Activated T-helper 2 cell treated with anti-CD3 and anti-CD28 coated beads, Interferon-gamma antibody, Interleukin-2, Interleukin-4, amounts not matched to agents 10 μg/mL and 5 μg/mL and 100 μg/mL, durations not matched to agents 14 hours and 24 hours and 36 hours (primary cell): ENCODE measurements at regions of chr7 and their contacts with region 1.

Region 1: GRCh38 chr7:50266635-50267386 is 37.7 kb upstream of the IKZF1 start:
- DNase-seq: peak; percentile 78
- H3K4me3 Mint-ChIP-seq: peak overlapping the region; percentile 68
- H3K27ac Mint-ChIP-seq: peak overlapping the region; percentile 94
- H3K4me1 Mint-ChIP-seq: peaks cover 88% of the 10 kb centered on the region
- H3K27me3 Mint-ChIP-seq: no peaks in the 10 kb centered on the region

Region 2: GRCh38 chr7:50142425-50143017 is 124.3 kb before region 1 on chr7:
- intact Hi-C with region 1: loop called (anchors 2 kb)
- DNase-seq: no peak
- H3K4me3 Mint-ChIP-seq: peak overlapping the region; percentile 30
- H3K27ac Mint-ChIP-seq: peak overlapping the region; percentile 77
- H3K4me1 Mint-ChIP-seq: peaks cover 44% of the 10 kb centered on the region
- H3K27me3 Mint-ChIP-seq: peaks cover 2% of the 10 kb centered on the region

Region 3: GRCh38 chr7:50212666-50213621 is 53.9 kb before region 1 on chr7:
- intact Hi-C with region 1: loop called (anchors 1 kb)
- DNase-seq: no peak
- H3K4me3 Mint-ChIP-seq: peak overlapping the region; percentile 64
- H3K27ac Mint-ChIP-seq: peak overlapping the region; percentile 92
- H3K4me1 Mint-ChIP-seq: peaks cover 90% of the 10 kb centered on the region
- H3K27me3 Mint-ChIP-seq: no peaks in the 10 kb centered on the region

Region 4: GRCh38 chr7:50246551-50246950 is 20.3 kb before region 1 on chr7:
- intact Hi-C with region 1: no loop called
- DNase-seq: no peak
- H3K4me3 Mint-ChIP-seq: no peak overlapping the region
- H3K27ac Mint-ChIP-seq: no peak overlapping the region
- H3K4me1 Mint-ChIP-seq: peaks cover 9% of the 10 kb centered on the region
- H3K27me3 Mint-ChIP-seq: no peaks in the 10 kb centered on the region

Region 5: GRCh38 chr7:50281680-50282445 is 15.1 kb after region 1 on chr7:
- intact Hi-C with region 1: loop called (anchors 2 kb)
- DNase-seq: no peak
- H3K4me3 Mint-ChIP-seq: peak overlapping the region; percentile 28
- H3K27ac Mint-ChIP-seq: peak overlapping the region; percentile 53
- H3K4me1 Mint-ChIP-seq: peaks cover 44% of the 10 kb centered on the region
- H3K27me3 Mint-ChIP-seq: no peaks in the 10 kb centered on the region

Region 6: DNA sequence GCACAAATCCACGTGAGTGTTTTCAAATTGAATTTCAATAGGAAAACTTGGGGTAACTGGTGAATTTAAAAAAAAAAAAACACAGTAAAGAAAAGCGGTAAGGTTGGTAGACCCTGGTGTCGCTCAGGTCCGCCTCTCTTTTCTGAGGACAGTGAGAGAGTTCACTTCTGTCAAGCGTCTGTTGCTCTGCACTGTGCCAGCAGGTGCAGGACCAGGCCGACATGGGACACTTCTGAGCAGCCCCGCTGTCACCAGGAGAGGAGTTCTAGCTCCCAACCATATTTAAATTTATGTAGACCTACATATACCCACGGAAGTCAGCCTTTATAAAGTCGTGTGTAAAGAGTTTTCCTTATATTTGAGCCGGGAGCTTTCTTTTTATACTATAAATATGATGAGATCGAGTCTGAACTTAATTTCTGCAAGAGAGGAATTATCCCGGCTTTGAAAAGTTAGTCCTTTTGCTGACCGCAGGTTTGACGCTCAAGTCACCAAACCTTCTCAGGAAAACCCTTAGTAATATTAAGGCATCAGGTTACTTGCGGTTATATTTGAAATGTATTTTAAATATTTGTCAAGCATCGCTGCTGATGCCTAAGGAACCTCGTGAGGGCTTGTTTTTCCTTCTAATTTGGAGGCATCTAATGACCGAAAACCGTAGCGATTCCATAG is 38.2 kb after region 1 on chr7:
- intact Hi-C with region 1: loop called (anchors 1 kb)
- DNase-seq: peak; percentile 56
- H3K4me3 Mint-ChIP-seq: peak overlapping the region; percentile 99
- H3K27ac Mint-ChIP-seq: peak overlapping the region; percentile 98
- H3K4me1 Mint-ChIP-seq: peaks cover 31% of the 10 kb centered on the region
- H3K27me3 Mint-ChIP-seq: no peaks in the 10 kb centered on the region

Region 7: DNA sequence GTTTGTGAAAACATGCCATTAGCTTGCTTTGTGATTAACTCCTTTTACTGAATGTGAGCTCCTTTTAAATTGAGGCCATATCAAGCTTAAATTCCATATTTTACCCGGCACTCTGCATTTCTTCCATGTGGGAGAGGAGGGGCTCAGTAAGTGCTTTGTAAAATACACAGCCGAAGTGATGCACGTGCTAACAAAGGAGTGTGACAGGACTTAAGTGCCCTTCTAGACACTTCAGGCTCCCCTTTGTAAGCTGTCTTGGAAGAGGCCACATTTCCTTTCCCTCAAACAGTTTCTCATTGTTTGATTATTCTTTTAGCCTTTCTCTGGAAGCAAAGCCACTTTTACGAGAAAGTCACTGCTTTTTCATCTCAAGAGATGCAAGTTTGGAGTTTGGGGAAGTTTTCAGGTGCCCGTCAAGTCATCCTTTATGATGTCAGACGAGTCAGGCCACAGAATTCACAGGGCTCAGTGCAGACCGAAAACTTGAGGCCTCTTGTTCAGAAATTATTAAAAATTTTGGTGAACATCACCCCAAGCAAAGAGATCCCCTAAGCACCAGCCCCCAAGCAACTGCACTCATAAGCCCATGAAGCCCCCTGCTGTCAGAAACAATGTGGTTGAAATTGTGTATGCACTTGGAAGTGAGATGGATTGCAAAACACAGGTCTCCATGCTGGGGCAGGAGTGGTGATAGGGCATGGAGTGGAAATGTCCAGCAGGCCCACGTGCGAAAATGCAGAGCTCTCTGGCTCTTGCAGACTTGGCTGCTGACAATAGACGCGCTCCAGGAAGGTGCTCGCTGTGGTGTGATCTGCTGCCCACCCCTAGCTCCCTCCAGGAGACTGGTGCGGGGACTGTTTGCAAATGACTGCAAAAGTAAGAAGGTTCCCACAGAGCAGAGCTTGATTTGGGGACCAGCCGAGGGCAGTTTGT is 49.2 kb after region 1 on chr7:
- intact Hi-C with region 1: no loop called
- DNase-seq: no peak
- H3K4me3 Mint-ChIP-seq: peak overlapping the region; percentile 99
- H3K27ac Mint-ChIP-seq: peak overlapping the region; percentile 98
- H3K4me1 Mint-ChIP-seq: peaks cover 82% of the 10 kb centered on the region
- H3K27me3 Mint-ChIP-seq: no peaks in the 10 kb centered on the region

Region 8: DNA sequence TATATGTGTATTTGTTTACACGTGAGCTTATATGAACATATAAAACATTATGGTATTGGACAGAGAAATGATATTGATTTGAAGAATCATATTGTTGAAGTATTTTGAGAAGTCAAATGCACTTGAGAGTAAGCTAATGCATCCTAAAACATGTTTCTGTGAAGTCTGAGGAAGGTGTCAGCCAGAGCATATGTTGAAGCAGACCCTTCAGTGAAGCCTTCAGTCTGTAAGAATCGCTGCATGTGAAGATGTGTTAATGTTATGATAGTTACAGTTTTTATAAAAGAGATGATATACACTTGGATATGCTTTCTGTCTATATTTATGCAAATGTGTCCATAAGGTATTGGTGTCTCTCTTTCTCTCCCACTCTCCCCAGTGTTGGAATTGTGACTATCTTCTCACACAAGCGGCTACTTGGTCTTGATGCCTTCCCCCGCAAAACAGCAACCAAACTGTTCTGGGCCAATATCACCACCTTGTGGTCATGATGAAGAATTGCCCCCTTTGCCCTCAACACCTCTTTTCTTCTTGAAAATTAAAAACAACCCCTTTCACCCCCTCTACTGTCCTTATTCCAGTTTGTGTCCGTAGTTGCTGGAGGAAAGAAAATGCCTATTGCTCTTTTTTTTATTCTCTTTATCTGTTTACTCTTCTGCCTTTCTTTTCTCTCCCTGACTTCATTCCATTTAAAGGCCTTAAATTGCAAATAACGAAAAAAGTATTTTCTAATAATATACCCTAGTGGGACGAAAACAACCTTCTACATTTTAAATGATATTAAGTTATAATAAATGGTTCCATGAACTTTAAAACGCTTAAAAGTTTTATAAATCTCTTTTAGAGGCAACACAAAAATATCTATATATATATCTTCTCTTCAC is 102.6 kb after region 1 on chr7:
- intact Hi-C with region 1: loop called (anchors 2 kb)
- DNase-seq: no peak
- H3K4me3 Mint-ChIP-seq: peak overlapping the region; percentile 45
- H3K27ac Mint-ChIP-seq: peak overlapping the region; percentile 94
- H3K4me1 Mint-ChIP-seq: peaks cover 95% of the 10 kb centered on the region
- H3K27me3 Mint-ChIP-seq: no peaks in the 10 kb centered on the region

Region 9: GRCh38 chr7:50379539-50379938 is 112.7 kb after region 1 on chr7:
- intact Hi-C with region 1: no loop called
- DNase-seq: no peak
- H3K4me3 Mint-ChIP-seq: no peak overlapping the region
- H3K27ac Mint-ChIP-seq: peak overlapping the region; percentile 69
- H3K4me1 Mint-ChIP-seq: peaks cover 70% of the 10 kb centered on the region
- H3K27me3 Mint-ChIP-seq: no peaks in the 10 kb centered on the region

Region 10: DNA sequence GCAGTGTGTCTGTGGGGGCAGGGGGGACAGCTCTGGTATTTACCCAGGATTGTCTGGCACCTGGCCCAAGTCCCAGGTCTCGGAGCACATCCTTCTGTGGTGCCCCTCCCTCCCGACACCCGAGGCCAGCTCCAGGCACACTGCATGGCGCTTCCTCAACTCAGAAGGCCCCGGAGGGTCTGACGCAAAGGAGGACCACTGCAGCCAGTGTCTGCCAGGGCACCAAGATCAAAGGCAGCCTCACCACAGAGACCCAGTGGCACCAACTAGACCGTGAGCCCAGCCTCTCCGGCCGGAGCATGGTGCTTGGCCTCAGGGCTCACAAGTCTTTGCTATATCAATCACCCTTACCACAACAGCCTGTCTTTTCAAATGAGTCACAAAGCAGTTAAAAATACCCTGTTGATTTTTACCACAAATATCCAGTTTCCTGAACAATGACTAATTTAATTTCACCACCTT is 397.7 kb after region 1 on chr7:
- intact Hi-C with region 1: loop called (anchors 5 kb)
- DNase-seq: no peak
- H3K4me3 Mint-ChIP-seq: no peak overlapping the region
- H3K27ac Mint-ChIP-seq: no peak overlapping the region
- H3K4me1 Mint-ChIP-seq: peaks cover 67% of the 10 kb centered on the region
- H3K27me3 Mint-ChIP-seq: no peaks in the 10 kb centered on the region